MCF 10A (cell line): ENCODE measurements at regions of chr14 and their contacts with region 1.

Region 1: DNA sequence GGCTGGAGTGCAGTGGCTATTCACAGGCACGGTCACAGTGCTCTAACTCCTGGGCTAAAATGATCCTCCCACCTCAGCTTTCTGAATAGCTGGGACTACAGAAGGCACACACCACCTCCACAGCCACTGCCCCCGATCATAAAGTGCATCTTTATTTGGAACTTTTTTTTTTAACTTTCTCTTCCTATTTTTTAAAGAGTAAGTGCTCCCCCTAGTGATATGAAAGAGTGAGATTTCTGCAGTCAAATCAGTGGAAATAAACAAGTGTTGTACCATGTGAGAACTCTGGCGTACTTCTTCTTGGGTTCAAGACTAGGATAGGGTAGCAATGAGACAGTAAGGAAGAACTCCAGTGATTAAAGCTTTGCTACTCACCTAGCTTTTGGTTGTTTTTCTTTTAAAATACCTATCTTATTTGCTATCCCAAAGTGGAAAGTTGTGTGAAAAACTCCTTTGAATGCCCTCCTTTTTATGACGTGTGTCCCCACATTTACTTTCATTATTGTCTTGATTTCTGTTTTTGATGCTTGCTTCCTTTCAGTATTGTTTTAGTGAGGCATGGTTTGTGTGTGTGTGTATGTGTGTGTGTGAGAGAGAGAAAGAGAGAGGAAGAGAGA is 6.6 kb downstream of the PPP4R4 start:
- DNase-seq: peak; percentile 55
- H3K4me3 Mint-ChIP-seq: peak overlapping the region; percentile 35
- H3K27ac Mint-ChIP-seq: peak overlapping the region; percentile 2
- H3K4me1 Mint-ChIP-seq: peaks cover 18% of the 10 kb centered on the region
- H3K27me3 Mint-ChIP-seq: no peaks in the 10 kb centered on the region
- CTCF ChIP-seq: peak; percentile 34

Region 2: GRCh38 chr14:94036313-94037050 is 144.3 kb before region 1 on chr14:
- CTCF ChIA-PET with region 1: interaction called, 23 read pairs
- POLR2A ChIA-PET with region 1: no interaction called
- intact Hi-C with region 1: loop called (anchors 1 kb)
- DNase-seq: peak; percentile 79
- H3K4me3 Mint-ChIP-seq: no peak overlapping the region
- H3K27ac Mint-ChIP-seq: no peak overlapping the region
- H3K4me1 Mint-ChIP-seq: peaks cover 5% of the 10 kb centered on the region
- H3K27me3 Mint-ChIP-seq: no peaks in the 10 kb centered on the region
- CTCF ChIP-seq: peak; percentile 74

Region 3: GRCh38 chr14:94115058-94115591 is 65.6 kb before region 1 on chr14:
- CTCF ChIA-PET with region 1: no interaction called
- POLR2A ChIA-PET with region 1: no interaction called
- intact Hi-C with region 1: no loop called
- DNase-seq: peak; percentile 25
- H3K4me3 Mint-ChIP-seq: no peak overlapping the region
- H3K27ac Mint-ChIP-seq: no peak overlapping the region
- H3K4me1 Mint-ChIP-seq: peaks cover 29% of the 10 kb centered on the region
- H3K27me3 Mint-ChIP-seq: no peaks in the 10 kb centered on the region
- CTCF ChIP-seq: no peak

Region 4: DNA sequence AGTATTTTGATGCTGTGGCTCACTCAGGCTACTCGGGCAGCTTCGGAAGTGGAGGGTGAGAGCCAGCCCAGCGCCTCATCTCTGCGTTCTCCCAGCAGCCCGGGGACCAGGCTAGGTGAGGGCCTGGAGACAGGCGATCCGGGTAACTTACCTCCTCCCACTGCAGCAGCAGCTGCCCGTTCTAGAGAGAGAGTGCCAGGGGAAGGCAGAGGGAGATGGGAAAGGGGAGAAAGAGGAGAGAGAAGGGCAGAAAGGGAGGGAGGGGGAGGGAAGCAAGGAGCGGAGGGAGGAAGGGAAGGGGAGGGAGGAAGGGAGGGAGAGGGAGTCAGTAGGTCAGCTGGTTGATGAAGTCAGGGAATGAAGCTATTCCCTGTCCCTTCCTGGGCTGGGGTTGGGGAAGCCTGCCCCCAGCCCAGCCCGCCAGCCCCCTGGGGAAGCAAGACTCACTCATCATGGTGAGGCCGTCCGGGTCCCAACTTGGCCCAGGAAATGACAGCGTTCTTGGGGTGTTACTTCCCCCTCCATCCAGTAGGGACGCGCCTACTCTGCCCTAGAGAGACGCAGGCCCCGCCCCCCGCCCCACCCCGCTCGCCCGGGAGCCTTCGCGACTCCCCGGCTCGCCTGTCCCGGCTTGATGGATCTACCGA is 51.5 kb before region 1 on chr14 and contains the start of gene IFI27L2:
- CTCF ChIA-PET with region 1: interaction called, 34 read pairs
- POLR2A ChIA-PET with region 1: interaction called, 3 read pairs
- intact Hi-C with region 1: no loop called
- DNase-seq: peak; percentile 86
- H3K4me3 Mint-ChIP-seq: peak within 1 kb of the TSS; percentile 80
- H3K27ac Mint-ChIP-seq: peak within 1 kb of the TSS; percentile 43
- H3K4me1 Mint-ChIP-seq: peaks cover 9% of the 10 kb centered on the region
- H3K27me3 Mint-ChIP-seq: no peaks in the 10 kb centered on the region
- CTCF ChIP-seq: peak; percentile 26
- total RNA-seq, gene IFI27L2: 44.3 and 59.3 TPM in 2 replicates

Region 5: GRCh38 chr14:94164685-94165431 is 15.9 kb before region 1 on chr14:
- CTCF ChIA-PET with region 1: no interaction called
- POLR2A ChIA-PET with region 1: no interaction called
- intact Hi-C with region 1: no loop called
- DNase-seq: no peak
- H3K4me3 Mint-ChIP-seq: no peak overlapping the region
- H3K27ac Mint-ChIP-seq: no peak overlapping the region
- H3K4me1 Mint-ChIP-seq: no peaks in the 10 kb centered on the region
- H3K27me3 Mint-ChIP-seq: peaks cover 3% of the 10 kb centered on the region
- CTCF ChIP-seq: no peak

Region 6: GRCh38 chr14:94193776-94194175 is 13.0 kb after region 1 on chr14:
- CTCF ChIA-PET with region 1: interaction called, 29 read pairs
- POLR2A ChIA-PET with region 1: interaction called, 3 read pairs
- intact Hi-C with region 1: no loop called
- DNase-seq: no peak
- H3K4me3 Mint-ChIP-seq: no peak overlapping the region
- H3K27ac Mint-ChIP-seq: no peak overlapping the region
- H3K4me1 Mint-ChIP-seq: no peaks in the 10 kb centered on the region
- H3K27me3 Mint-ChIP-seq: no peaks in the 10 kb centered on the region
- CTCF ChIP-seq: no peak

Region 7: GRCh38 chr14:94213021-94213420 is 32.3 kb after region 1 on chr14:
- CTCF ChIA-PET with region 1: interaction called, 12 read pairs
- POLR2A ChIA-PET with region 1: no interaction called
- intact Hi-C with region 1: no loop called
- DNase-seq: peak; percentile 22
- H3K4me3 Mint-ChIP-seq: no peak overlapping the region
- H3K27ac Mint-ChIP-seq: no peak overlapping the region
- H3K4me1 Mint-ChIP-seq: peaks cover 3% of the 10 kb centered on the region
- H3K27me3 Mint-ChIP-seq: no peaks in the 10 kb centered on the region
- CTCF ChIP-seq: no peak

Region 8: GRCh38 chr14:94317259-94317658 is 136.5 kb after region 1 on chr14:
- CTCF ChIA-PET with region 1: interaction called, 3 read pairs
- POLR2A ChIA-PET with region 1: no interaction called
- intact Hi-C with region 1: loop called (anchors 10 kb)
- DNase-seq: peak; percentile 67
- H3K4me3 Mint-ChIP-seq: no peak overlapping the region
- H3K27ac Mint-ChIP-seq: no peak overlapping the region
- H3K4me1 Mint-ChIP-seq: peaks cover 32% of the 10 kb centered on the region
- H3K27me3 Mint-ChIP-seq: no peaks in the 10 kb centered on the region
- CTCF ChIP-seq: no peak

Region 9: GRCh38 chr14:94412671-94413638 is 232.2 kb after region 1 on chr14:
- CTCF ChIA-PET with region 1: interaction called, 7 read pairs
- POLR2A ChIA-PET with region 1: no interaction called
- intact Hi-C with region 1: loop called (anchors 5 kb)
- DNase-seq: peak; percentile 62
- H3K4me3 Mint-ChIP-seq: no peak overlapping the region
- H3K27ac Mint-ChIP-seq: no peak overlapping the region
- H3K4me1 Mint-ChIP-seq: peaks cover 8% of the 10 kb centered on the region
- H3K27me3 Mint-ChIP-seq: no peaks in the 10 kb centered on the region
- CTCF ChIP-seq: peak; percentile 45